Ovary (tissue), 10 donors: ENCODE measurements at regions of chr5 and their contacts with region 1.

Region 1: GRCh38 chr5:172902497-172903200 is 56.6 kb upstream of the RPL26L1 start:
- DNase-seq: peak; percentile 91 to 94 (median 93)
- H3K4me3 ChIP-seq: no peak overlapping the region
- H3K27ac ChIP-seq: peak overlapping the region; percentile 75 to 79
- H3K4me1 ChIP-seq: peaks cover 35% of the 10 kb centered on the region
- H3K27me3 ChIP-seq: no peaks in the 10 kb centered on the region
- CTCF ChIP-seq: peak; percentile 23 to 75 (median 44)
- EP300 ChIP-seq: peak; percentile 5
- POLR2A ChIP-seq: no peak

Region 2: GRCh38 chr5:172764849-172765765 is 137.5 kb before region 1 on chr5:
- intact Hi-C with region 1: loop called in 3 of 4 experiments (anchors 2 to 5 kb)
- DNase-seq: peak; percentile 86 to 98 (median 89)
- H3K4me3 ChIP-seq: peak overlapping the region; percentile 82
- H3K27ac ChIP-seq: peak overlapping the region; percentile 40 to 98
- H3K4me1 ChIP-seq: peaks cover 11% of the 10 kb centered on the region
- H3K27me3 ChIP-seq: no peaks in the 10 kb centered on the region
- CTCF ChIP-seq: no peak
- EP300 ChIP-seq: peak; percentile 92
- POLR2A ChIP-seq: no peak

Region 3: DNA sequence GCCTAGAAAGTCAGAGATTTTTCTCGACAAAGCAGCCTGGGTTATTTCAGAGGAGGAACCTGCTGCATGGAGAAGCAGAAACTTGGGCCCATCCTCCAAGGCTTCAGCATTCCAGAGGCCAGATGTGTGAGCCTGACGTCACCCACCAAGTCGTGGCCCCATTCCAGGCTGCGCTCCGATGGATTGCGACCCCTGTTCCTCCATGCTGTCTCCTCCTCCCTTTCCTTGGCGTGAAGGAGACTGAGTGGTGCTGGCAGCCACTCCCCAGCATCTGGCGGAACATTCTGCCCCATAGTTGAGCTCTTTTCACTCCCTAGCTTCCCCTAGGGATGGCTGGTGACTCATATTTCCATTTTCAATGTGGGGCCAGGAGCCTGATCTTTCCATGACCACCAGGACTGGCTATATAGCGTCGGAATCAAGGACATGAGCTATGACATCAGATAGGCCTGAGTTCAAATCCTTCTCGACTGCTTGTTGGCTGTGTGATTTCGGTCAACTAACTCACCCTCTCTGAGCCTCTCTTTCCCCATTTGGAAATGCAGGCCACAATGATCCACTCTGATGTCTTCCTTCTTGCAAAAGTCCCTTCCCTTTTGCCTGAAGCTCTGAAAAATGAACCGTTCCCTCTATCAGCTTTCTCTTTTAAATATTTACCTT is 107.2 kb before region 1 on chr5:
- intact Hi-C with region 1: loop called in 1 of 4 experiments (anchors 5 kb)
- DNase-seq: peak; percentile 98 to 99 (median 99)
- H3K4me3 ChIP-seq: no peak overlapping the region
- H3K27ac ChIP-seq: peak overlapping the region; percentile 4 to 77
- H3K4me1 ChIP-seq: peaks cover 13% of the 10 kb centered on the region
- H3K27me3 ChIP-seq: no peaks in the 10 kb centered on the region
- CTCF ChIP-seq: peak in 2 of 3 donors; percentile 21 to 47
- EP300 ChIP-seq: peak; percentile 99
- POLR2A ChIP-seq: peak; percentile 34

Region 4: GRCh38 chr5:172855597-172856292 is 46.9 kb before region 1 on chr5:
- intact Hi-C with region 1: no loop called
- DNase-seq: peak in 4 of 5 donors; percentile 56 to 70 (median 61)
- H3K4me3 ChIP-seq: no peak overlapping the region
- H3K27ac ChIP-seq: peak overlapping the region; percentile 19 to 49
- H3K4me1 ChIP-seq: peaks cover 41% of the 10 kb centered on the region
- H3K27me3 ChIP-seq: no peaks in the 10 kb centered on the region
- CTCF ChIP-seq: no peak
- EP300 ChIP-seq: no peak
- POLR2A ChIP-seq: no peak

Region 5: GRCh38 chr5:172868924-172869591 is 33.6 kb before region 1 on chr5:
- intact Hi-C with region 1: loop called in 1 of 4 experiments (anchors 2 kb)
- DNase-seq: peak; percentile 84 to 92 (median 87)
- H3K4me3 ChIP-seq: no peak overlapping the region
- H3K27ac ChIP-seq: peak overlapping the region; percentile 63 to 76
- H3K4me1 ChIP-seq: peaks cover 56% of the 10 kb centered on the region
- H3K27me3 ChIP-seq: no peaks in the 10 kb centered on the region
- CTCF ChIP-seq: peak in 2 of 3 donors; percentile 59 to 64
- EP300 ChIP-seq: peak; percentile 95
- POLR2A ChIP-seq: no peak

Region 6: DNA sequence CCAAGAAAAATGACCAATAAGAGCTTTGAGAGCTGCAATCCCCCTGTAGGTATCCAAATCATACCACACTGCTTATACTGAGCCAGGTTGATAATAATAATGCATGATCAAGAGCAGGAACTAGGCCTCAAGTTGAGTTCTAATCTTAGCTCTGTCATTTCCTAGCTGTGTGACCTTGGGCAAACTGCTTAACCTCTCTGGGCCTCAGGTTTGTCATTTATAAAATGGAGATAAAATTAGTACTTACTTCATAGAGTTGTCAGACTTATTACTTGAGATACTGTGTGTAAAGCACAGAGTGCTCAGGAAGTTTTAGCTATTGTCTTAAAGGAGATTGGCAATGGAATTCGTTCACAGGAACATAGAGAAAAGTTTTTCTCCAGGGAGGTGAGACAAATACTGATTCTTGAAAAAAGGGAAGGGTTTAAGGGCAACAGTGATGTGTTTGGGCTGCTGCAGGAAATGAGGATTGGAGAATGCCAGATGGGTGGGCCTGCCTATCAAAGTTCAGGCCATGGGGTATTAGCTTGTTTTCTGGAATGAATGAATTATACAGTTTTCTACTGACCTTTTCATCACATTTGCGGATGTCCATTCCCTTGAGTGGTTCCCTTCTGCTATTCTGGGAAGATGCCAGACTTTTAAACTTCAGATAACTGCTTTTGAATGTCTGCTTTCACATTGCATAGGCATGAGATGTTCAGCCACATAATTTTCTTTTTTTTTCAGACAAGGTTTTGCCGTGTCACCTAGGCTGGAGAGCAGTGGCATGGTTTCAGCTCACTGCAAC is 70.7 kb after region 1 on chr5:
- intact Hi-C with region 1: no loop called
- DNase-seq: no peak
- H3K4me3 ChIP-seq: no peak overlapping the region
- H3K27ac ChIP-seq: no peak overlapping the region
- H3K4me1 ChIP-seq: no peaks in the 10 kb centered on the region
- H3K27me3 ChIP-seq: no peaks in the 10 kb centered on the region
- CTCF ChIP-seq: no peak
- EP300 ChIP-seq: no peak
- POLR2A ChIP-seq: no peak

Region 7: DNA sequence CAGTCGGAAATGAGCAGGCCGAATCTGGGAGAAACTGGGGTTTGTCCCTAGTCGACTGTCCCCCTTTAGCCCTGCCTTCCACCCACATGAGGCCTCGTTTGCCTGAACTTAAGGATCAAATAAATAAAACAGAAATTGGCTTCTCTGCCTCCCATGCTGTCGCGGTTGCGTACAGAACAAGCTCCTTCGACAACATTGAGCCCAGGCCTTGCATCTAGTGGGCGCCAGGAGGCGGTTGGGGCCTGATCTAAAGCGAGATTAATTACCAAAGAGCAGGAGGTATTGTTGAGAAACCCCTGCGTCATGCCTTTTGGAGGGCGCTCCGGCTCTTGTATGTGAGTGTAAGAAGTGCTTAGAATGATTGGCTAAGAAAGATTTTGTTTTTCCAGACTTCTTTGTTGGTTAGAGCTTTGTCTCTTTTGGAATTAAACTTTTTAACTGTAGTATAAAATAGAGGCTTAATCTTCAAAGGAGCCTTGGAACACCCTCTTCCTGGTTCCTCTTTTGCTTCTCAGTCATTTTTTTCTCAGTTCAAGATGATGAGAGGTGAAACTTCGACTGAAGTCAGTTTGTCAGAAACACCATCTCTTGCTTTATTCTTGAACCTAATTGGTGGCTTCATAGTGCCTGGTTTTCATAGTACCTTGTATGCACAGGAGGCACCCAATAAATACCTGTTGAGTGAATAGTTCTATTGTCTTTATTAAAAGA is 81.7 kb after region 1 on chr5:
- intact Hi-C with region 1: no loop called
- DNase-seq: peak; percentile 53 to 77 (median 59)
- H3K4me3 ChIP-seq: peak overlapping the region; percentile 55
- H3K27ac ChIP-seq: peak overlapping the region; percentile 88 to 89
- H3K4me1 ChIP-seq: peaks cover 2% of the 10 kb centered on the region
- H3K27me3 ChIP-seq: no peaks in the 10 kb centered on the region
- CTCF ChIP-seq: peak in 1 of 3 donors; percentile 33
- EP300 ChIP-seq: no peak
- POLR2A ChIP-seq: no peak